Right ventricle myocardium inferior (tissue), 1 donor: ENCODE measurements at regions of chr2 and their contacts with region 1.

Region 1: DNA sequence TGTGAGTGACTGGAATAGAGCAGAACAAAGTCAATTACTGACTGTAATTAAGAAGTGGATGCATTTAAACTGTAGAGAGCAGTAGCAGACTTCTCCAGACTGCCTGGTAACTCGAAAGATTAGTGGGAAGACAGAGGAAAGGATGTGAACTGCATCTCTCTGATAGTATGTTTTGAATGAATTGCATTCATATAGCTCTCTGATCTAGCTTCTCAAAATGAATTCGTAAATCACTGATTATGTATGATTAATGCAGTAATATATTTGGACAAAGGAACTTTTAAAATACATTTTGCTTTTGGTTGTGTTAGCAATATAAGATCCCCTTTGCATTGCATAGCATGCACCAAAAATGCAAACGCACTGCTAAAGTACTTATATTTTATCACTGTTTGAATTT is 304.0 kb downstream of the ARHGAP15 start:
- DNase-seq: no peak
- ATAC-seq: peak; percentile 71

Region 2: GRCh38 chr2:143482316-143482715 is 49.1 kb after region 1 on chr2:
- intact Hi-C with region 1: loop called (anchors 5 kb)
- DNase-seq: no peak
- ATAC-seq: peak; percentile 75